Adrenal gland (tissue), 19 donors: ENCODE measurements at regions of chr11 and their contacts with region 1.

Region 1: GRCh38 chr11:45859661-45860140 is 12.4 kb downstream of the CRY2 start:
- DNase-seq: peak; percentile 95 to 99 (median 97)
- H3K4me3 ChIP-seq: no peak overlapping the region
- H3K27ac ChIP-seq: peak overlapping the region; percentile 19 to 87 (median 77)
- H3K4me1 ChIP-seq: peaks cover 36 to 51% of the 10 kb centered on the region in 2 donors
- H3K27me3 ChIP-seq: no peaks in the 10 kb centered on the region
- CTCF ChIP-seq: no peak
- POLR2A ChIP-seq: peak in 1 of 2 donors; percentile 81

Region 2: DNA sequence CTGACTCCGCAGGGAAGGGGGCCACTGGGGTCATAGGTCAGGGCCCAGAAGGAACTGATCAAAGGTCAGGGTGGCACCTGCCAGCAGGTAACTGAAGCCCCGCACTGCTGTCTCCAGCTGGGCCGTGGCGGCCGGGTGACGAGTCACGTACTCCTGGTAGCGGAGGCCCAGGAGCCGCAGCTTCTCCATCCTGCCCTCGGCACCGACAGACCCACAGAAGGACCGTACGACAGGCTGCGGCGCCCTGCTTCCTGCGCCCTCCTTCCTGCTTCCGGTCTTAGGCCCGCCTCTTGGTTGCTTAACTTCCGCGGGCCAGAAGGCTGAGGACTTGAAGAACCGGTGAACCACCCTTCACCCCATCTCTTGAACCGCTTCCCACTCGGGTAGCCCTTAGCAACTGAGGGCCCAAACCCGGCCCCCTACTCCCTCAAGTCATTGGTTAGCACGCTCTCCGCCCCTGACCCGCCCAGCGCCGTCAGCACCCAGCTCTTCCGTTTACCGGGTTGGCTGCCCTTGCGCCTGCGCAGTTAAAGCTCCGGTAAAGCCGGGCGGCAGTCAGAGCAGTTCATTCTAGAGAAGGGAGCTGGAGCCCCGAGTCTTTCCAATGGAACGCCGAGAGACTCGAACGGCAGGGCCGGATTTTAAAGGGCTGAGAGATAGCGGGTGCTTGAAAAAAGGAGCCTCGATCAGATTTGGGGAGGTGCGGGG is 58.1 kb after region 1 on chr11 and contains the start of gene PEX16:
- intact Hi-C with region 1: loop called in 1 of 2 experiments (anchors 10 kb)
- DNase-seq: peak; percentile 96 to 99 (median 97)
- H3K4me3 ChIP-seq: peak within 1 kb of the TSS; percentile 42 to 92 (median 67)
- H3K27ac ChIP-seq: peak within 1 kb of the TSS; percentile 4 to 95 (median 77)
- H3K4me1 ChIP-seq: peaks cover 6 to 32% of the 10 kb centered on the region in 2 donors
- H3K27me3 ChIP-seq: no peaks in the 10 kb centered on the region
- CTCF ChIP-seq: no peak
- POLR2A ChIP-seq: peak; percentile 54 to 68
- total RNA-seq, gene PEX16: 32.6 to 48.5 (median 39.6) TPM

Region 3: GRCh38 chr11:46006418-46007070 is 146.8 kb after region 1 on chr11:
- intact Hi-C with region 1: loop called in 1 of 2 experiments (anchors 10 kb)
- DNase-seq: peak in 3 of 7 donors; percentile 16 to 34 (median 30)
- H3K4me3 ChIP-seq: no peak overlapping the region
- H3K27ac ChIP-seq: no peak overlapping the region
- H3K4me1 ChIP-seq: peaks cover 0 to 53% of the 10 kb centered on the region in 2 donors
- H3K27me3 ChIP-seq: no peaks in the 10 kb centered on the region
- CTCF ChIP-seq: peak; percentile 42 to 78 (median 63)
- POLR2A ChIP-seq: no peak

Region 4: DNA sequence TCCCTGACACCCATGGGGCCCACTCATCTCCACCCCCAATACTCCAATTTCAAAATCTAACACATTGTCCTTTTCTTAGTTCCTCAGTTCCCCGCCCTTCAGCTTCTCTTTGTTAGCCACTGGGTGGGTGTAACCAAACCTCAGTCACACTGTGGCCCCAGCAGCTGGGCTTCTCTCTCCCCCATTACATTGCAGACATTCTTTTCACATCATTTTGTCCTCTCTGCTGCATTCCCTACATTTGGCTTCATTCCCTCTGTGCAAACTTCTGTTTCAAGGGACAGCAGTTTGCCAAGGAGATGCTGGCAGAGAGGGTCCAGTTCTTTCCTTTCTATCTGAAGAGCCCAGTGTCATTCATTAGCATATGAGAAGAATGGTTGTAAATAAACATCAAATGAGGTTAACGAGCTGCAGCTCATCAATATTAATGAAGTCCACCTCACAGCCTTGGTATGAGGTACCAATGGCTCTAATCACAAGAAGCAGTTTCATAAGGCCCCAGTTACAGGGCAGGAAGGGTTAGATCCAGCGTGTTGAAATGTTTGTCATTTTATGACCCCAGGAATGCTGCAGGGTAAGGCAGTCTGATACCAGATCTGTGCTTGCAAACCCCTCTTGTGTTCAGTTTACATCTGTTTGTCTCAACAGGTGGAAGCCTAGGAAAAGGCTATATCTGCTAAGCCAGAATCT is 1244.7 kb after region 1 on chr11:
- intact Hi-C with region 1: no loop called
- DNase-seq: no peak
- H3K4me3 ChIP-seq: no peak overlapping the region
- H3K27ac ChIP-seq: no peak overlapping the region
- H3K4me1 ChIP-seq: no peaks in the 10 kb centered on the region
- H3K27me3 ChIP-seq: no peaks in the 10 kb centered on the region
- CTCF ChIP-seq: no peak
- POLR2A ChIP-seq: no peak